ENCODE measurements at regions of chr17 and their contacts with region 1.

Region 1: DNA sequence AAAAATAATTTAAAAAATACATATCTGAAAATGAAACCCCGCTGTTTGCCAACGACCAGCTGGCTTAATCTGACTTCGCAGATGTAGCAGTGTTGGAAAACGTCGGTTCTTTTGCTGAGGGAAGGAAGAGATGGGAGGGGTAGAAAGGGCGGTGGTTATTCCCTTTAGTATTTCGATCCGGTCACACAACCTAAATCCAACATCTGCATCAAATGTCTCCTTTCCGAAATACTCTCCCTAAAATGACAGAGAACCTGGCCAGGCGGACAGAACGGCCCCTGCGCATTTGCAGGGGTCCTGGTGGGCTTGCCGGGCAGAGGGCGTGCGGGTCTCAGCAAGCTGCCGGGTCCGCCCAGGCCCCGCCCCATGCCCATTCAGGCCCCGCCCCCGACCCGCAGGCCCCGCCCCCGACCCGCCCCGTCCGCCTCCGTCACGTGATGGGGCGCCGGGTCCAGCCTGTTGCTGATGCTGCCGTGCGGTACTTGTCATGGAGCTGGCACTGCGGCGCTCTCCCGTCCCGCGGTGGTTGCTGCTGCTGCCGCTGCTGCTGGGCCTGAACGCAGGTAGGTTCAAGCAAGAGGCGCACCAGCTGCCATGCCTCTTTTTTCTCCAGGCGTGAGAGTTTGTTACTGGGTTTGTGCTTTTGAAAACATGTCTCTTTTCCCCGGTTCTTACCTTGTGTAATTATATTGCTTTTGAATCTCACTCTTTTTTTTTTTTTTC is at the start of gene SCPEP1:
- DNase-seq: peak; percentile 63 to 92 (median 80)
- ATAC-seq: peak; percentile 96
- H3K4me3 ChIP-seq: peak within 1 kb of the TSS; percentile 72
- H3K4me3 Mint-ChIP-seq: peak within 1 kb of the TSS; percentile 92
- H3K27ac ChIP-seq: no peak within 1 kb of the TSS
- H3K27ac Mint-ChIP-seq: peak within 1 kb of the TSS; percentile 73
- H3K4me1 ChIP-seq: peaks cover 17% of the 10 kb centered on the region
- H3K4me1 Mint-ChIP-seq: peaks cover 13% of the 10 kb centered on the region
- H3K27me3 ChIP-seq: no peaks in the 10 kb centered on the region
- H3K27me3 Mint-ChIP-seq: peaks cover 8% of the 10 kb centered on the region
- CTCF ChIP-seq: no peak
- total RNA-seq, gene SCPEP1: 22.1 to 25.5 TPM

Region 2: DNA sequence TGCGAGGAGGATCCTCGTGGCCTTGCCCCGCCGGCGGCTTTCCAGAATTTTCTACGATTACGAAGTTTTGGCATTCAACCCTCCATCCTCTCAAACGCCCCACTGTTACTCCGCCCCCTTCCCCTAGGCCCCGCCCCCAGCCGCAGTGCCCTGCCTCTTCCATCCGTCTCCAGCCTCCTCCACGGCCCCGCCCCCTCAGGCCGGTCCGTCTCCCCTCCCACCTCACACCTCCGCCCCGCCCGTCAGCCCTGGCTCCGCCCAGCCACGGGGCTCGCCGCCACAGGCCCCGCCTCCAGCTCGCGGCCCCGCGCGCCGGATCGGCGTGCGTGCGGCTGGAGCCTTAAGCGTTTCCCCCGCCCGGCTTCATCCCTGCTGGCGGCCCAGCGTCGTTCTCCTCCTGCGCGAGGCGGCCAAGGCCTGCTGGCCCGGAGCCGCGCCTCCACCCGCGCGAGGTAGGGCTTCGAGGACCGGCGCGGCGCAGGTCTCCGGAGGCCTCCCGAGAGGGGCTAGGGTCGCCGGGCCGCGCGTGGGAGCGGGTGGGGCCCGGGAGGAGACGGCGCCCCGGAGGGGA is 143.9 kb before region 1 on chr17 and contains the starts of genes C17orf67 and DGKE:
- CTCF ChIA-PET with region 1: no interaction called
- POLR2A ChIA-PET with region 1: interaction called, 4 read pairs
- intact Hi-C with region 1: loop called in 1 of 2 experiments (anchors 2 kb)
- DNase-seq: peak; percentile 97 to 100 (median 99)
- ATAC-seq: peak; percentile 87
- H3K4me3 ChIP-seq: peak within 1 kb of the TSS; percentile 96
- H3K4me3 Mint-ChIP-seq: peak within 1 kb of the TSS; percentile 99
- H3K27ac ChIP-seq: peak within 1 kb of the TSS; percentile 58 to 83
- H3K27ac Mint-ChIP-seq: peak within 1 kb of the TSS; percentile 95
- H3K4me1 ChIP-seq: peaks cover 41% of the 10 kb centered on the region
- H3K4me1 Mint-ChIP-seq: peaks cover 67% of the 10 kb centered on the region
- H3K27me3 ChIP-seq: no peaks in the 10 kb centered on the region
- H3K27me3 Mint-ChIP-seq: no peaks in the 10 kb centered on the region
- CTCF ChIP-seq: no peak
- total RNA-seq, gene C17orf67: 4.3 to 4.8 TPM
- total RNA-seq, gene DGKE: 20.0 to 22.3 TPM

Region 3: GRCh38 chr17:56960596-56961538 is 17.0 kb before region 1 on chr17 and contains the start of gene COIL:
- CTCF ChIA-PET with region 1: interaction called, 21 read pairs
- POLR2A ChIA-PET with region 1: interaction called, 11 read pairs
- intact Hi-C with region 1: loop called (anchors 2 kb)
- DNase-seq: peak; percentile 89 to 96 (median 92)
- ATAC-seq: peak; percentile 97
- H3K4me3 ChIP-seq: peak within 1 kb of the TSS; percentile 68
- H3K4me3 Mint-ChIP-seq: peak within 1 kb of the TSS; percentile 93
- H3K27ac ChIP-seq: peak within 1 kb of the TSS; percentile 82 to 83
- H3K27ac Mint-ChIP-seq: peak within 1 kb of the TSS; percentile 78
- H3K4me1 ChIP-seq: peaks cover 26% of the 10 kb centered on the region
- H3K4me1 Mint-ChIP-seq: peaks cover 27% of the 10 kb centered on the region
- H3K27me3 ChIP-seq: peaks cover 0 to 2% of the 10 kb centered on the region in 2 experiments
- H3K27me3 Mint-ChIP-seq: no peaks in the 10 kb centered on the region
- CTCF ChIP-seq: peak; percentile 96
- total RNA-seq, gene COIL: 19.4 to 20.3 TPM